ENCODE measurements at regions of chr4 and their contacts with region 1.

Region 1: DNA sequence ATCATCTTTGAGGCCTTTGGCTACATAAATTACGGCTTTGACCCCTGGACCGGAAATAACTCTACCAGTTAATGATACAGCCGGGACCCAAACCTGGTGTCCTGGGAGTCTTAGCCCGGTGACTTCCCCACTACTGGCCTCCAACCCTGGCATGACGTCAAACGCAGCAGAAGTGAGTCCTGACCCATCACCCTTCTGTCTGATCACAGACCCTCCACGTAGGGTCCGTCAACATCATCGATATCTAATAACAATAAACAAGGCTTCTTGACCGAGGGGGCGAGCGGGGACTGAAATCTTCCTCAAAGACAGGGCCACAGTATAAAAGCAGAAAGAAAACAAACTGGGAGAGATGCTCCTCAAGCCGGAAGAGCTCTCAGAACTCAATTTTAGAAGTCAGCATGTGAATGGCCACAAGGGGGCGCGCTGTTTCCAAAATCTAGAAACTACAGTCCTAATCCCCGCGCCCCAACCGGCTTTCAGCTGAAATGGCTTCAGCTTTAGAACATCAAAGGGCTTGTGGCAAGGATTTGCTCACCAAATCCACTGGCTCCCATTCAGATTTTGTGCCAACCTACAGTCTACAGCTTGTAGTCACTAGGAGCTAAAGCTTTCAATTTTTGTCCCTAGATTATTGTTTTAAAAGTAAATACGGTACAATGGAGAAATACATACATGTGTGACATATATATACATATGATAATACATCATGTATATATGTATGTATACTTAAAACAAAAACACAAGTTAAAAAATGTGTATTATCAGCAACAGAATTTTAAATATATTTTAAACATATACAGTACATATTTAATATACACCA is 46.4 kb upstream of the ENPP6 start:
- DNase-seq: peak; percentile 97
- H3K4me3 ChIP-seq: no peak overlapping the region
- H3K27ac ChIP-seq: peak overlapping the region; percentile 32
- H3K4me1 ChIP-seq: peaks cover 55% of the 10 kb centered on the region
- CTCF ChIP-seq: peak; percentile 97

Region 2: DNA sequence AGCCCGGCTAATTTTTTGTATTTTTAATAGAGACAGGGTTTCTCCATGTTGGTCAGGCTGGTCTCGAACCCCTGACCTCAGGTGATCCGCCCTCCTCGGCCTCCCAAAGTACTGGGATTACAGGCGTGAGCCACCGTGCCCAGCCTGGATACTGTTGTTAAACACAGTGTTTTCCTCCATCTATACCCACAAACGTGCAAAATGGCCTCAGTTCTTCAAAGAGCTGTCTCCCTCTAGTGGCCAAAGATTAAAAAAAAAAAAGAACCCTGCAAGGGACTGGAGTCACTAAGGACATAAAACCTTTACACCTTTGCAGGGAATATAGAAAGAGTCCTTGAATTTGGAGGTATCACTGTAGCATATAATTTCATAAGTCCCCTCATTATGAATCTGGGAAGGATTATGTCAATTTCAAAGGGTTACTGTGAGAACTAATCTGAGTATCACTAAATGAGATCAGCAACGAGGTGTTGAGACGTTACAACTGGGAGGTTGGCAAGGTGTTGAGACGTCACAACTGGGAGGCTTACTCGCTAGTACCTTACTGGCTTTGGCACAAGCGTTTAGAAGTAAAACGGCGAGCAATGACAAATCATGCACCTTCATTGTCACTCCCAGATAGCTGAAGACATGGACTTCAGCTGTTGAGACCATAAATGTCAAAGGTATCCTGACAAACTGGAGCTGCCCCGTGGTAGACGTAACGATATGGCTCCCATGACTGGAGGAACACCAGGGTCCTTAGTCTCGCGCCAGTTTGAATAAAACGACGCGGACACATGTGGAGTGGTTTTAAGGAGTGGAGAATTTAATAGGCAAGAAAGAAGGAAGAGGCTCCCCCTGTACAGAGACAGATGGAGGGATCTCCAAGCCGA is 13.1 kb before region 1 on chr4:
- CTCF ChIA-PET with region 1: no interaction called
- POLR2A ChIA-PET with region 1: interaction called, 10 read pairs
- intact Hi-C with region 1: no loop called
- DNase-seq: peak; percentile 77
- H3K4me3 ChIP-seq: no peak overlapping the region
- H3K27ac ChIP-seq: no peak overlapping the region
- H3K4me1 ChIP-seq: no peaks in the 10 kb centered on the region
- CTCF ChIP-seq: peak; percentile 88

Region 3: GRCh38 chr4:184310171-184310567 is 46.0 kb after region 1 on chr4:
- CTCF ChIA-PET with region 1: interaction called, 5 read pairs
- POLR2A ChIA-PET with region 1: interaction called, 7 read pairs
- intact Hi-C with region 1: loop called (anchors 2 kb)
- DNase-seq: peak; percentile 73
- H3K4me3 ChIP-seq: no peak overlapping the region
- H3K27ac ChIP-seq: no peak overlapping the region
- H3K4me1 ChIP-seq: peaks cover 56% of the 10 kb centered on the region
- CTCF ChIP-seq: peak; percentile 76

Region 4: DNA sequence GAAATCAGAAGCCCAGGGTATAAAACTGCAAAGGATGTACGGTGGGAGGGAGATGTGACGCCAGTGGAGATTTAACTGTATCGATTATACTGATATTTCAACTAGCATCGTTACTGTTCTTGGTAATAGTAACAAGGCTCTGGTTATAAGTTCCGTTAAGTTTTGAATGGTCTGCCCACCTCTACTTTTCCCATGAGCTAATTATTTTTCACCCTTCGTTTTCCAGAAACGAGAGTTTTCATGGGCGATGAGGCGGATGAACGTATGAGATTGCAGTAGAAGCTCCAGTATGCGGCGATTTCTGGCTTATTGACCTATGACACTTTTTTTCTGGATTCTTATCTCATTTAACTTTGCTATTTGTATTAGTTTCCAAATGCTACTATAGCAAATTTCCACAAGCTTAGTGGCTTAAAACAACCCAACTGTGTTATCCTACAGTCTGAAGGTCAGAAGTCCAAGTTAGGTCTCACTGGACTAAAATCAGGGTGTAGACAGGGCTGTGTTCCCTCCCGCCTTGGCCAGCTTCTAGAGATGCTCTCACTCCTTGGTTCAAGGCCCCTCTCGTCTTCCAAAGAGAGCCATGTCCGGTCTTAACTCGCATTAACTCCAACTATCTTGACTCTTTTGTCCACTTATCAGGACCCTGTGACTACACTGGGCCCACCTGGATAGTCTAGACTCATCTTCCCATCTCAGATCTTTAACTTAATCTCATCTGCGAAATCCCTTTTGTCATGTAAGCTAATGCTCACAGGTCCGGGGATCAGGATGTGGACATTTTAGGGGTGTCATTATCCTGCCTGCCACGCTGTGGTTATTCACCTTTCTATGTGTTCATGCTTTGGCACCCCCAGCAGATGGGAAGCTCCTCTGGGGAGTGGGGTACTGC is 87.7 kb after region 1 on chr4:
- CTCF ChIA-PET with region 1: interaction called, 6 read pairs
- POLR2A ChIA-PET with region 1: interaction called, 31 read pairs
- intact Hi-C with region 1: loop called (anchors 1 kb)
- DNase-seq: no peak
- H3K4me3 ChIP-seq: no peak overlapping the region
- H3K27ac ChIP-seq: no peak overlapping the region
- H3K4me1 ChIP-seq: peaks cover 69% of the 10 kb centered on the region
- CTCF ChIP-seq: no peak

Region 5: GRCh38 chr4:184538023-184538599 is 274.0 kb after region 1 on chr4:
- CTCF ChIA-PET with region 1: interaction called, 5 read pairs
- POLR2A ChIA-PET with region 1: interaction called, 76 read pairs
- intact Hi-C with region 1: loop called (anchors 1 kb)
- DNase-seq: peak; percentile 93
- H3K4me3 ChIP-seq: peak overlapping the region; percentile 76
- H3K27ac ChIP-seq: peak overlapping the region; percentile 82
- H3K4me1 ChIP-seq: peaks cover 45% of the 10 kb centered on the region
- CTCF ChIP-seq: peak; percentile 89

Region 6: DNA sequence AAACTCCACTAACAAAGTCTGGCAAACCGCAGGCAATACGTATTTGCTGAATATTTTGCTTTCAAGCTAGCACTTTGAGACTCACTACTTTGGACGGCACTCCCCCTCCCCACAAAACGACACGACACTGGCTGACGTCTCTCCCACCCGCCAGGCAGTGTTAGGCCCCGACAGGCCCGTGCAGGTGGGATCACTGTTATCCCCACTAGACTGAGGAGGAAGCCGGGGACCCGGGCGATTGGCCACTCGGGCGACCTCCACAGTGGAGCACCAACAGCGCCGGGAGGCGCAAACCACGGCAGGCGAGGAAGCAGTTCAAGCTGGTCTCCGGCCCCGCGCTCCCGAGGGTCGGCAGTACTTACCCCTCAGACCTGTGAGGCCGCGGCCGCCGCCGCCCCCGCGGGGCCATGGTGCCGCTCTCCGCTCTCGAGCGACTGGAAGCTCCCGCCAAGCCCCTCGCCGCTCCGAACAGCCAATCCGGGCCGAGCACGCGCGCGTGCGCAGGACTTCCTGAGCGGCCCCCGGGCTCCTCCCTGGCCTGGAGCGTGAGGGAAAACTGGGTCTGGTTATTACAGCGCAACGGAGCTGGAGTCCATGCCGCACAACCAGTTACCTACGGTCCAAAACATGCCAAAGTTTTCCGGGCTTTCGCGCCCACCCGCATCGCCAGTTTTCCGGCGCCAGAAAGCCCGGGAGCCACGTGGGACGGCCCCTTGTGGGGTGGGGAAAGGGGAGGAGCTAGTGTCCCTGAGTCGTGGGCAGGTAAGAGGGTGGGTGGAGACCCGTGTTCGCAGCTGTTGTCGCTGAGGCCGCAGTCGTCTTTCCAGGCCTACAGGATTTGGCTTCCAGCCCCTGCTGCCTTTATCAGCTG is 469.8 kb after region 1 on chr4 and contains the start of gene CENPU:
- CTCF ChIA-PET with region 1: no interaction called
- POLR2A ChIA-PET with region 1: interaction called, 12 read pairs
- intact Hi-C with region 1: loop called (anchors 2 kb)
- DNase-seq: peak; percentile 99
- H3K4me3 ChIP-seq: peak within 1 kb of the TSS; percentile 94
- H3K27ac ChIP-seq: peak within 1 kb of the TSS; percentile 84
- H3K4me1 ChIP-seq: peaks cover 30% of the 10 kb centered on the region
- CTCF ChIP-seq: no peak
- total RNA-seq, gene CENPU: 83.9 and 85.1 TPM in 2 replicates